ENCODE measurements at regions of chr17 and their contacts with region 1.

Region 1: GRCh38 chr17:56319517-56319916 is 166.2 kb downstream of the ANKFN1 start:
- DNase-seq: no peak
- ATAC-seq: peak in 2 of 4 donors; percentile 54 to 63
- H3K4me3 ChIP-seq: no peak overlapping the region
- H3K27ac ChIP-seq: no peak overlapping the region
- H3K4me1 ChIP-seq: peaks cover 0 to 7% (median 0%) of the 10 kb centered on the region in 12 donors
- H3K27me3 ChIP-seq: peaks cover 0 to 30% (median 0%) of the 10 kb centered on the region in 9 donors
- CTCF ChIP-seq: peak; percentile 29 to 59 (median 45)
- POLR2A ChIP-seq: no peak

Region 2: DNA sequence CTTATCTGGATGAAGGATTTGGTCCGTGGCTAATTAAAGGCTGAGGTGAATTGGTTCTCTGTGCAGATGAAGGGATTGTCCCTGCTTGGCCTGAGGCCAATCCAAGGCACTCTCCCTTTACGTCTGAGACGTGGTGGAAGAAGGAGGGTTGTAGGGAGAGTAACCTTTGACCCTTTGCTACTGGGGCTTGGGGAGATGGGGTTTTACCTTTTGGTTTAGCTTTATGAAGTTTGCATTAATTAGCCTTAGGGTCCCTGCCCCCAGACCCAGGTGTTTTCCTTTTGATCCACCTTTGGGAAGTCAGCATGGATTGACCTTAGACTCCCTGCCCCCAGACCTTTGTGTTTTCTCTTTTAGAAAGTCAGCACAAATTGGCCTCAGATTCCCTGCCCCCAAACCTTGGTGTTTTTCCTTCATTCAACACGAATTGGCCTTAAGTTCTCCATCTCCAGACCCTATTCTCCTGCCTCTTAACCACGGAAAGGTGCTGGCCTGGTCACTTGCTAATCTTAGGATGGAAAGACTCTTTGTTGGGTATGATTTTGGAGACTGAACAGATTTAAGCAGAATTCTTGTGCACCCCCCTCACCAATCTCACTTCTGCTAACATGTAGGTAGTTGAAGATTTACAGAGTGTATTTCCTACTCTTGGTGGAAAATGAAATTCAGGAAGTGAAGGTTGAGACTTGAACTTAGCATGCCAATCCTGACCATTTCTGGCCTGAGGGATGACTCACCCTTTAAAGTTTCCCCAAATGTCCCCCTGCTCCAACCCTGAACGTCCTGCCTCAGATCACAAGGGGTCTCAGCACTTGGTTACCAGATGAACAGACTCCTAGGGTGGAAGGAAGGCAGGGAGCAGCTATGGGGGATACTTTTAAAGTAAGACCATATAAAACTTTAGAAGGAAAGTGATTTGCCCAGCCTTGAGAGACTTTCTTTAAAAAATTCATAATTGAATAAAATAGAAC is 874.8 kb before region 1 on chr17:
- intact Hi-C with region 1: loop called in 1 of 10 experiments (anchors 10 kb)
- DNase-seq: no peak
- ATAC-seq: no peak
- H3K4me3 ChIP-seq: no peak overlapping the region
- H3K27ac ChIP-seq: peak overlapping the region in 2 of 12 donors; percentile 9 to 88
- H3K4me1 ChIP-seq: peaks cover 0 to 13% (median 0%) of the 10 kb centered on the region in 12 donors
- H3K27me3 ChIP-seq: no peaks in the 10 kb centered on the region
- CTCF ChIP-seq: no peak
- POLR2A ChIP-seq: no peak

Region 3: GRCh38 chr17:55845385-55845784 is 474.1 kb before region 1 on chr17:
- intact Hi-C with region 1: loop called in 2 of 10 experiments (anchors 5 to 10 kb)
- DNase-seq: peak; percentile 27 to 69 (median 49)
- ATAC-seq: peak; percentile 71 to 93 (median 80)
- H3K4me3 ChIP-seq: peak overlapping the region in 9 of 12 donors; percentile 15 to 36 (median 32)
- H3K27ac ChIP-seq: no peak overlapping the region
- H3K4me1 ChIP-seq: peaks cover 0 to 6% (median 0%) of the 10 kb centered on the region in 12 donors
- H3K27me3 ChIP-seq: no peaks in the 10 kb centered on the region
- CTCF ChIP-seq: peak; percentile 33 to 73 (median 56)
- POLR2A ChIP-seq: no peak

Region 4: DNA sequence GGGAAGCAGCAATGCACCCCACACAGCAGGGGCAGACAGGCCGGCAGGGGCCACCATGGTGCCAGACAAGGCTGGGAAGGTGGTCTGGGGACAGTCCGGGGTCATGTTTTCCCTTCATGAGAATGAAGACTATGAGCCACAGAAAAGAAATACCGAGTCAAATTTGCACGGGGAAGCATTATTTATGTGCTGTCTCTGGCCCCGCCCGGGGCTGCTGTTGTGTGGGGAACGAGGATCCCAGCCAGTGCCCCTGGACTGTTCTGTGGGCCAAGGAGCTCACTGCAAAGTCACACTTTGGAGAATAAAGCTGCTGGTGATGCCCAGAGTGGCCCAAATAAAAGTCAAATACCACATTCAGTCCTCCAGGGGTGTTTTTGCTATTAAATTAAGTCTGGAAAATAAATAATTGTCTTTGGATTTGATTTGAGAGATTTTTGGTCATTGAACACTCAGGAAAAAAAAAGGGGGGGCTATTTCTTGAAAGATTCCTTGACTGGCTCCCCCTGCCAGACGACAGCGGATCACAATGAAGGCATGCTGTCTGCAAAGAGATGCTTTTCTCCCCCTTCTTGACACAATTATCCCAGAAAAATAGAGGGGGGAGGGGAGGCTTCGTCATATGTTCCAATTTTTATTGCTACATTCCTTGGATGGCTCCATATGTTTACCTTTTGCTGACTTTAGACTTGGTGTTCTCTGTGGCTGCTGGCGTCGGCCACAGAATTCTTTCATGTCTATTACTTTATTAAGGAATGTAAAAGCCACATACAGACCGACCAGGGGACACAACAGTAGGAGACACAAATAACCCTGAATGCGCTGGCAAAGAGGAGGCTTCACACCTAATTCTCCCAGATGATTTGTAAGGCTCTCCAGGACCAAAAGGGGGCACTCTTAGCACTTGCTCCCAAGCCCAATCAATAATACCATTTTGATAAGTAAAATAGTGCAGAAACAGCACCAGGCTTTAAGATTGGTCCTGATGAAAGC is 193.4 kb before region 1 on chr17:
- intact Hi-C with region 1: loop called in 2 of 10 experiments (anchors 5 kb)
- DNase-seq: no peak
- ATAC-seq: no peak
- H3K4me3 ChIP-seq: no peak overlapping the region
- H3K27ac ChIP-seq: no peak overlapping the region
- H3K4me1 ChIP-seq: no peaks in the 10 kb centered on the region
- H3K27me3 ChIP-seq: peaks cover 0 to 10% (median 0%) of the 10 kb centered on the region in 9 donors
- CTCF ChIP-seq: peak; percentile 11 to 50 (median 29)
- POLR2A ChIP-seq: no peak

Region 5: DNA sequence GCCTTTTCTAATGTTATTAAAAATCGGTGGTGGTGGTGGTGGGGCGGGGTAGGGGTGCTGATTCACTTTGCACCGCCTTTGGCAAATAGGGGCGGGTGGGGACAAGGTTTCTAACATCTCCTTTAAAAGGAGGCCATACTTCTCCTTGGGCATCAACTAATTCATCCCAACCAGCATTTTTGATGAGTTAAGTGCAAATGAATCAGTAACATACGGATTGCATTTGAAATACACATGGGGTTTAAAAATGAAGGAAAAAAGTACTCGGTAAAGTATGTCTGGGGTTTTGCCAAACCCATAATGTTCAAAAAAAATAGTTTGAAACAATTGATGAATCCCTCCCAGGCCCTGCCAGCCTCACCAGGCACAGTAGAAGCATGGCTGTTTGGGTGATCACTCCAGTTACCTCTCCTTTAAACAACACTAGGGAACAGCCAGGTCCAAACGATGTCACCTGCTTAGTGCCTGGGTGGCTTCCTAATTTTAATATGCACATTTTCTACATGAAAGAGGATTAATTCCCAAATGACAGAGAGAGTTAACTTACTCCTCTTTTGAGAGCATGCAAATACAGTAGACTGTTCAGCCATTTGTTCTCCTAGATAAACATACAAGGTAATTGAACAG is 59.0 kb before region 1 on chr17:
- intact Hi-C with region 1: loop called in 1 of 10 experiments (anchors 2 kb)
- DNase-seq: no peak
- ATAC-seq: no peak
- H3K4me3 ChIP-seq: no peak overlapping the region
- H3K27ac ChIP-seq: no peak overlapping the region
- H3K4me1 ChIP-seq: no peaks in the 10 kb centered on the region
- H3K27me3 ChIP-seq: no peaks in the 10 kb centered on the region
- CTCF ChIP-seq: no peak
- POLR2A ChIP-seq: no peak

Region 6: DNA sequence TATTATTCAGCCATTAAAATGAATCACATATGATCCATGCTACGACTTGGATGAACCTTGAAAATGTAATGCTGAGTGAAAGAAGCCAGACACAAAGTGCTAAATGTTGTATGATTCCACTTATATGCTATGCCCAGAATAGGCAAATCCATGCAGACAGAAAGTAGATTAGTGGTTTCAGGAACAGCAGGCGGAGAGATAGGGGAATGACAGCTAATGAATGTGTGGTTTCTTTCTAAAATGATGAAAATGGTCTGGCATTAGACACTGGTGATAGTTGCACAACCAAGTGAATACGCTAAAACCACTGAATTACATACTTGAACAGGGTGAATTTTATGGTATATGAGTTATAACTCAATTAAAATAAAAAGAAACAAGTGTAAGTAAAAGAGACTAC is 152.2 kb after region 1 on chr17:
- intact Hi-C with region 1: no loop called
- DNase-seq: no peak
- ATAC-seq: no peak
- H3K4me3 ChIP-seq: no peak overlapping the region
- H3K27ac ChIP-seq: no peak overlapping the region
- H3K4me1 ChIP-seq: no peaks in the 10 kb centered on the region
- H3K27me3 ChIP-seq: no peaks in the 10 kb centered on the region
- CTCF ChIP-seq: no peak
- POLR2A ChIP-seq: no peak